Activated CD8-positive, alpha-beta memory T cell treated with anti-CD3 and anti-CD28 coated beads, Interleukin-2, amount 10 ng/mL, durations not matched to agents 7 days and 5 days (primary cell): ENCODE measurements at regions of chr11 and their contacts with region 1.

Region 1: DNA sequence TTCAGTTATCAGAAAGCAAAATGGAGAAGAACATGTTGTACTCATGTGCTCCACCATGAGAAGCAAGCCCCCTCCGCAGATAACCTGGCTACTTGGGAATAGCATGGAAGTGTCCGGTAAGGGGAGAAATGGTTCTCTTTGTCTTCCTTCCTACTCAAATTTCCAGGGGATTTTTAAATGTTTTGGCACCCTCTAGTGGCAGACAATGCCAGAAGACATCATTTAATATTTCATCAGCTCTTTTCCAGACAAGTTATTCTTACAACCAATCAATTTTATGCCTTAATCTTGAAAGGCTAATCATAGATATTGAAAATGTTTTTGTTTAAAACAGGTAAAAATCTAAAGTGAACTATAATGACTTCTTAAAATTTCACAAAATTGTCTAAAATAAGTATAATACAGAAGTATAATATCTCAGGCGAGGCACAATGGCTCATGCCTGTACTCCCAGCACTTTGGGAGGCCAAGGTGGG is 15.7 kb downstream of the CRTAM start:
- DNase-seq: peak; percentile 63
- ATAC-seq: no peak
- H3K4me3 Mint-ChIP-seq: no peak overlapping the region
- H3K27ac Mint-ChIP-seq: peak overlapping the region; percentile 17
- H3K4me1 Mint-ChIP-seq: peaks cover 58% of the 10 kb centered on the region
- H3K27me3 Mint-ChIP-seq: peaks cover 5% of the 10 kb centered on the region

Region 2: GRCh38 chr11:122559734-122560382 is 294.2 kb before region 1 on chr11:
- CTCF ChIA-PET with region 1: no interaction called
- DNase-seq: no peak
- ATAC-seq: no peak
- H3K4me3 Mint-ChIP-seq: no peak overlapping the region
- H3K27ac Mint-ChIP-seq: no peak overlapping the region
- H3K4me1 Mint-ChIP-seq: no peaks in the 10 kb centered on the region
- H3K27me3 Mint-ChIP-seq: peaks cover 18% of the 10 kb centered on the region

Region 3: DNA sequence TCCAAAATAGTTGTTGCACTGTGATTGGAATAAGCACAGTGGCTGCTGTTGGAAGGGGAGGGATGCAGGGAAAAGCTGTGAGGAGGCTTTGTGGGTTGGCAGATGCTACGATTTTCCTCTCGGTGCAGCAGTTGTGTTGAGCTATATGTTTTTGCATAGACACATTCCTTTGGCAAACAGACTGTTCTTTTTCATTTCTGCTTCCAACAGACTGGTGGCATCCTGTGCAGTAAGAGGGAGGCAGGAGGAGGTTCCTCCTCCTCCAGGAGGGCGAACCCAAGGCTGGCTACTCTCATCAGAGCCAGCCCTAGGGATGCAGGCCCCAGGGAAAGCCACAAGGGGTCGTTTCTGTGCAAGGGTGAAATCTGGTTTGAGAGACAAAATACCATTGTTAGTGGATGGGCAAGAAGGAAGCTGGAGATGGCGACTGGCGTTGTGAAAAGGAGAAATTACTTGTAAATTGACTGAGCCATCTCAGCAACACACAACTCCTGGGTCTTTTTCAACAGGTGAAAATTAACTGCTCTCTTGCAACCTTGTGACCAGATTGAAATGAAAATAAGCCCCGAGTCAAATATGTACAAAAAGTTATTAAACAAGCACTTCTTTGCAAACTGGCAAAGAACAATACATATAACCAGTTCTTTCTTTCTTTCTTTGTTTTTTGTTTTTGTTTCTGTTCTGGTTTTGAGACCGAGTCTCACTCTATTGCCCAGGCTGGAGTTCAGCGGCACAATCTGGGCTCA is 225.0 kb before region 1 on chr11:
- CTCF ChIA-PET with region 1: interaction called, 26 read pairs
- DNase-seq: peak; percentile 81
- ATAC-seq: peak; percentile 88
- H3K4me3 Mint-ChIP-seq: no peak overlapping the region
- H3K27ac Mint-ChIP-seq: no peak overlapping the region
- H3K4me1 Mint-ChIP-seq: peaks cover 15% of the 10 kb centered on the region
- H3K27me3 Mint-ChIP-seq: peaks cover 7% of the 10 kb centered on the region

Region 4: DNA sequence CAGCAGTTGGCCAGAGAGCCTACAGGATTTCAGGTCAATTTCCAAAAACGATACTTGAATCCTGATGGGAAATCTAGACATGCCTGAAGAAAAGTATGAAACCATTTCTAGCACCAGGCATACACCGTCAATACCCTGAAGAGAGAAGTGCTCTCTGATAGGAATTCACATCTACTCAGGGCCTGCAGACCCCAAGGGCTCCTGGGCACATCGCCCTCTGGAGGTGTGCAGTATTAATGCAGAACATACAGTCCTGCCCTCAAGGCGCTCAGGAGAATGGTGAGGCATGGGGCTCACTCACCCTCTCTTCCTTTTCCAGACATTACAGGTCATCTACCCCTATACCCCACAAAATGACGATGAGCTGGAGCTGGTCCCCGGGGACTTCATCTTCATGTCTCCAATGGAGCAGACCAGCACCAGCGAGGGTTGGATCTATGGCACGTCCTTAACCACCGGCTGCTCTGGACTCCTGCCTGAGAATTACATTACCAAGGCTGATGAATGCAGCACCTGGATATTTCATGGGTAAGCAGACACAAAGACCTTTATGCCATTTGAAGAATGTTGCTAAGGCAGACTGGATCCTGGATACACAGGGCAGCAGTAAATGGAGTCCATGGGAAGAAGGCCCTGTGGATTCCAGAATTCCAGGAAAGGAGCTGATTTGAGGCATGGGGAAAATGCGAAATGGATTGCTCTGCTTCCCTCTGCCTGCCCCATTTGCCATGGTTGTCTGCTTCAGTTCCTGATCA is 65.1 kb before region 1 on chr11:
- CTCF ChIA-PET with region 1: interaction called, 171 read pairs
- DNase-seq: no peak
- ATAC-seq: no peak
- H3K4me3 Mint-ChIP-seq: no peak overlapping the region
- H3K27ac Mint-ChIP-seq: no peak overlapping the region
- H3K4me1 Mint-ChIP-seq: no peaks in the 10 kb centered on the region
- H3K27me3 Mint-ChIP-seq: no peaks in the 10 kb centered on the region

Region 5: DNA sequence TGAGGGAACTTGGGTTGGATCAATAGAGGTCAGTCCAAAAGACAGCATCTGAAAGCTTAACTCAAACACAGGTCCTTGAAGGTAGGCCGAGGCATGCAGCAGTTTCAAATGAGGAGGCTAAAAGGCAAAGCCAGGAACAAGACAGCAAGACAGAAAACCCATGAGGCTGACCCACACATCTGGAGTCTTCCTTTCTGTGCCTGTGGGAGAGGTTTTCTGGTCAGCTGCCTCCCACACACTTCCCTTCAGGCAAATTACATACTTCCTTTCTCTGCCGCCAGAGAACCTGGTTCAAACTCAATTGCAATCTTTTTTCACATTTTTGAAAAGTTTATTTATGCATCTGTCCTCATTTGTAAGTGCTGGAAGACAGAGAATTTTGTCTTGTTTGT is 45.5 kb before region 1 on chr11:
- CTCF ChIA-PET with region 1: interaction called, 135 read pairs
- DNase-seq: no peak
- ATAC-seq: no peak
- H3K4me3 Mint-ChIP-seq: no peak overlapping the region
- H3K27ac Mint-ChIP-seq: peak overlapping the region; percentile 65
- H3K4me1 Mint-ChIP-seq: peaks cover 38% of the 10 kb centered on the region
- H3K27me3 Mint-ChIP-seq: no peaks in the 10 kb centered on the region

Region 6: GRCh38 chr11:122832721-122833470 is 21.1 kb before region 1 on chr11:
- CTCF ChIA-PET with region 1: interaction called, 120 read pairs
- DNase-seq: no peak
- ATAC-seq: no peak
- H3K4me3 Mint-ChIP-seq: no peak overlapping the region
- H3K27ac Mint-ChIP-seq: no peak overlapping the region
- H3K4me1 Mint-ChIP-seq: peaks cover 33% of the 10 kb centered on the region
- H3K27me3 Mint-ChIP-seq: no peaks in the 10 kb centered on the region

Region 7: DNA sequence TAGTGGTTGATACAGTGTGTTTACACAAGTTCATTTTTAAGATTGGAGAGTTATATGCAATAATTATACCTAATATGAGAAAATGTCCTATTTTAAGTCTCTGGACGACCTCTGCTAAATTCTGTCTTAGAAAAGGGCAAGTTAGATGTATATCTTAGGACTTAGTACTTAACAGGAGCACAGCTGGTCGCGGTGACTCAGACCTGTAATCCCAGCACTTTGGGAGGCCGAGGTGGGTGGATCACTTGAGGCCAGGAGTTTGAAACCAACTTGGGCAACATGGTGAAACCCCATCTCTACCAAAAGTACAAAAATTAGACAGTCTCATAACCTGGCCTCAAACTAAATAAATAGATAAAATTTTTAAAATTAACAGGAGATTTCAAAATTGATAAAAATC is 100.4 kb after region 1 on chr11:
- CTCF ChIA-PET with region 1: no interaction called
- DNase-seq: no peak
- ATAC-seq: no peak
- H3K4me3 Mint-ChIP-seq: no peak overlapping the region
- H3K27ac Mint-ChIP-seq: no peak overlapping the region
- H3K4me1 Mint-ChIP-seq: peaks cover 3% of the 10 kb centered on the region
- H3K27me3 Mint-ChIP-seq: no peaks in the 10 kb centered on the region

Region 8: DNA sequence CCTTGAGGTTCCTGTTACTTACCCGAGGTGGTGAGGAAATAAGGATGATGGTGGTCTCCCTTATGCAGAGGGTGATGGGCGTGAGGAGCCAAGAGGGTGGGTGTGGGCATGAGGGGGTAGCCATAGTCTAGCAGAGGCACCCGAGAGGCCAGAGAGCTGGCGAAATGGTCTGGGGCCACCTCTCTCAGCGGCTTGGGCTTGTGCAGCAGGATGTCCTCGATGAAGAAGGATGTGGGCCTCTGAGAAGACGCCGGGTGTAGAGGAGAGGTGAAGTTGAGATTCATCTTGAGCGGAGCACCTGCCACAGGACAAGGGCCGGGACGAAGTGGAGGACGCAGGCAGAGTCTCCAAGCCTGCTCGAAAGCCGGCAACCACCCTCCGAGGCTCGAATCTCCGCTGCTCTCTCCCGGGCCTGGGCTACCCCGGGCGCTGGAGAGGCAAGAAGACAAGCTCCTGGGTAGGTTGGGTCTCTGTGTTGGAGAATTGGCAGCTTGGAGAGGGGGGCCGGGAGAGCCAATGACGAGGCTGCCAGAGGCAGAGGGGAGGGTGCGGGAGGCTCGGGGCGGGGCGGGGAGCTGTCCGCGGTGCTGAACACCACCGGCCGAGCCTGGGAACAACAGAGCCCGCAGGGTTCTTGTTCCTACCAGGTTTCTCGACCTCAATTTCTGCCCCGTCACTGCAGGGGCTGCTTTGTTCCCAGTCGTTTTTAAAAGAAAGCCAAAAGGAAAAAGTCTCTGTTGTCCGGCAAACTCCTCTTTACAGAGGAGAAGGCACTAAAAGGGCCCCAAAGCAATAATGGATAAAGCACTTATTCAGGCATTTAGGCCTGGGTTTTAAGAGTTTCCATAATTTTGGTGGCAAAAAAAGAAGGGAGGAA is 127.6 kb after region 1 on chr11 and contains the start of gene BSX:
- CTCF ChIA-PET with region 1: no interaction called
- DNase-seq: peak; percentile 67
- ATAC-seq: peak; percentile 62
- H3K4me3 Mint-ChIP-seq: no peak within 1 kb of the TSS
- H3K27ac Mint-ChIP-seq: no peak within 1 kb of the TSS
- H3K4me1 Mint-ChIP-seq: peaks cover 40% of the 10 kb centered on the region
- H3K27me3 Mint-ChIP-seq: peaks cover 94% of the 10 kb centered on the region
- total RNA-seq, gene BSX: not detected

Region 9: DNA sequence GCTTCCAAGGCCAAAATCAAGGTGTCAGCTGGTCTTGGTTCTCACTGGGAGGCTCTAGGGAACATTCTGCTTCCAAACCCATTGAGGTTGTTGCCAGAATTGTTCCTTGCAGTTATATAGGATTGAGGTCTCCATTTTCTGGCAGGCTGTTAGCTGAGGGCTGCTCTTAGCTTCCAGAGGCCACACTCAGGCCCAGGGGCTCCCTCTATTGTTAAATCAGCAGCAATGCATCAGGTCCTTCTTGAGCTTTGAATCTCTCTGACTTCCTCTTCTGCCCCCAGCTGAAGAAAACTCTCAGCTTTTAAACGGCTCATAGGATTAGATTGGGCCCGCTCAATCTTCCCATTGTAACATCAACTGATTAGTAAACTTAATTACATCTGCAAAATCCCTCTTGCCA is 167.0 kb after region 1 on chr11:
- CTCF ChIA-PET with region 1: interaction called, 215 read pairs
- DNase-seq: peak; percentile 53
- ATAC-seq: peak; percentile 86
- H3K4me3 Mint-ChIP-seq: no peak overlapping the region
- H3K27ac Mint-ChIP-seq: no peak overlapping the region
- H3K4me1 Mint-ChIP-seq: peaks cover 9% of the 10 kb centered on the region
- H3K27me3 Mint-ChIP-seq: peaks cover 9% of the 10 kb centered on the region